ENCODE measurements at regions of chr11 and their contacts with region 1.

Region 1: GRCh38 chr11:46860218-46860617 is 14.1 kb upstream of the CKAP5 start:
- DNase-seq: no peak
- H3K4me3 Mint-ChIP-seq: no peak overlapping the region
- H3K27ac Mint-ChIP-seq: no peak overlapping the region
- H3K4me1 Mint-ChIP-seq: no peaks in the 10 kb centered on the region
- H3K27me3 Mint-ChIP-seq: no peaks in the 10 kb centered on the region

Region 2: DNA sequence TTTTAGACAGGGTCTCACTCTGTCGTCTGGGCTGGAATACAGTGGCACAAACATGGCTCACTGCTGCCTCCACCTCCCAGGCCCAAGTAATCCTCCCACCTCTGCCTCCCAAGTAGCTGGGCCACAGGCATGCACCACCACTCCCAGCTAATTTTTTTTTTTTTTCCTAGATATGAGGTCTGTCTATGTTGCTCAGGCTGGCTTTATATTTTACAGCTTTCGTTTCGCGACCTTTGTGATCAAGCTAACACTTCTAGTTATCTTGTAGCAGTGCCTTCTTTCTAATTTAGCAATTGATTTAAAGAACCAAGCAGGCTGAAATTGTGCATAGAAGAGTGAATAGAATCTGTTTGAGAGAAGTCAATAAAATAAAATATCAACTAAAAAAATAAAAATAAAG is 25.4 kb before region 1 on chr11:
- CTCF ChIA-PET with region 1: no interaction called
- POLR2A ChIA-PET with region 1: no interaction called
- intact Hi-C with region 1: loop called (anchors 1 kb)
- DNase-seq: no peak
- H3K4me3 Mint-ChIP-seq: no peak overlapping the region
- H3K27ac Mint-ChIP-seq: no peak overlapping the region
- H3K4me1 Mint-ChIP-seq: peaks cover 26% of the 10 kb centered on the region
- H3K27me3 Mint-ChIP-seq: no peaks in the 10 kb centered on the region

Measured in activated CD4-positive, alpha-beta memory T cell treated with anti-CD3 and anti-CD28 coated beads for 36 hours (primary cell).